ENCODE measurements at regions of chr14 and their contacts with region 1.

Region 1: GRCh38 chr14:92039719-92040430 is at the start of gene TRIP11:
- DNase-seq: peak; percentile 80
- ATAC-seq: peak; percentile 98
- H3K4me3 ChIP-seq: peak within 1 kb of the TSS; percentile 77 to 91 (median 89)
- H3K27ac ChIP-seq: peak within 1 kb of the TSS; percentile 97
- H3K4me1 ChIP-seq: peaks cover 43% of the 10 kb centered on the region
- H3K27me3 ChIP-seq: no peaks in the 10 kb centered on the region; a peak in 2 of 5 replicates
- CTCF ChIP-seq: peak; percentile 26; the same call in 1 of the 2 replicates
- EP300 ChIP-seq: 0 out of 4 replicates have a peak, but pooled peaks of 1 of the 2 experiments have one; percentile 39
- POLR2A ChIP-seq: peak; percentile 90 to 97
- RAD21 ChIP-seq: no peak
- total RNA-seq, gene TRIP11: 32.8 and 51.4 TPM in 2 replicates

Region 2: GRCh38 chr14:91963465-91963864 is 76.4 kb before region 1 on chr14:
- CTCF ChIA-PET with region 1: no interaction called
- POLR2A ChIA-PET with region 1: no interaction called
- in situ Hi-C with region 1: no loop called
- intact Hi-C with region 1: no loop called
- DNase-seq: no peak
- ATAC-seq: no peak
- H3K4me3 ChIP-seq: no peak overlapping the region
- H3K27ac ChIP-seq: no peak overlapping the region
- H3K4me1 ChIP-seq: peaks cover 25% of the 10 kb centered on the region
- H3K27me3 ChIP-seq: no peaks in the 10 kb centered on the region
- CTCF ChIP-seq: no peak
- EP300 ChIP-seq: no peak
- POLR2A ChIP-seq: no peak
- RAD21 ChIP-seq: no peak

Region 3: DNA sequence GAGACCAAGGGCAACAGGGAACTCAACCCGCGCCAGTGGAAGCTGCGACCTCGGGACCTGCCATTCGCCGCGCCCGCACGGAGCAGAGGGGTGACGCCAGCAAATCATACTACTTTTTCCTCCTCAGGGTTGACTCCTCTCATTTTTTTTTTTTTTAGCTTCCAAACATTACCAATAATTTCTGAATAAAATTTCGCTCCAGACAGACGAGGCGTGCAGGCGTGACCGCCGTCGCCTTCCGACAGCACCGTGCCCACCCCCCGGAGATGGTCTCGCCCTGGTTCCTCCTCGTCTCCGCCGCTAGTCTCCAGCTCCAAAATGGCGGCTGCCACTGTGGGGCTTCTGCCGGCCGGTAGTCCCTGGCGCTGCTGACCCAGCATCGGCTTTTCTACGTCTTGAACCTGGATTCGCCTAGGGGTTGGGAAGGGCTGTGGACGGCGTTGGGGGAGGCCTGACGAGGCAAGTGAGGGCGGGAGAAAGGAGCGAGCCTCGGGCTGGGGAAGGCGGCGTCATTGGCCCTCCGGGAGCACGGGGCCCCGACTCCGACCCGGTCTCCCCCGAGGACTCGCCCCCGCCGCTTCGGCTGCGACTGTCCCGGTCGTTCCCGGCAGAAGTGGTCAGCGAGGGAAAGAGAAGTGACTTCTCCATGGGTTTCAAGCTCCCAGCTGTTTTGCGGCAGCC is 81.9 kb after region 1 on chr14 and contains the starts of genes CPSF2 and NDUFB1:
- CTCF ChIA-PET with region 1: no interaction called
- POLR2A ChIA-PET with region 1: interaction called, 12 read pairs
- in situ Hi-C with region 1: no loop called
- intact Hi-C with region 1: no loop called
- DNase-seq: peak; percentile 63
- ATAC-seq: peak; percentile 95
- H3K4me3 ChIP-seq: peak within 1 kb of the TSS; percentile 89 to 97 (median 90)
- H3K27ac ChIP-seq: peak within 1 kb of the TSS; percentile 94
- H3K4me1 ChIP-seq: peaks cover 37% of the 10 kb centered on the region
- H3K27me3 ChIP-seq: no peaks in the 10 kb centered on the region; a peak in 1 of 5 replicates
- CTCF ChIP-seq: no peak
- EP300 ChIP-seq: peak in 1 of 2 experiments; percentile 20; a peak in 1 of 4 replicates
- POLR2A ChIP-seq: peak; percentile 86 to 94
- RAD21 ChIP-seq: no peak
- total RNA-seq, gene CPSF2: 67.9 and 126 TPM in 2 replicates
- total RNA-seq, gene NDUFB1: 281 and 308 TPM in 2 replicates

Measured in HepG2 (cell line).